ENCODE measurements at regions of chr15 and their contacts with region 1.

Region 1: GRCh38 chr15:40754883-40755811 is at the start of gene RMDN3:
- DNase-seq: peak; percentile 97
- ATAC-seq: peak; percentile 92
- H3K4me3 Mint-ChIP-seq: peak within 1 kb of the TSS; percentile 91
- H3K27ac Mint-ChIP-seq: peak within 1 kb of the TSS; percentile 99
- H3K4me1 Mint-ChIP-seq: peaks cover 27% of the 10 kb centered on the region
- H3K27me3 Mint-ChIP-seq: no peaks in the 10 kb centered on the region
- total RNA-seq, gene RMDN3: 12.3 to 18.8 TPM

Region 2: GRCh38 chr15:40593588-40594428 is 161.3 kb before region 1 on chr15 and contains the start of gene KNL1:
- CTCF ChIA-PET with region 1: no interaction called
- POLR2A ChIA-PET with region 1: no interaction called
- intact Hi-C with region 1: loop called in 1 of 2 experiments (anchors 1 kb)
- DNase-seq: peak; percentile 94
- ATAC-seq: peak; percentile 86
- H3K4me3 Mint-ChIP-seq: peak within 1 kb of the TSS; percentile 87
- H3K27ac Mint-ChIP-seq: peak within 1 kb of the TSS; percentile 95
- H3K4me1 Mint-ChIP-seq: peaks cover 24% of the 10 kb centered on the region
- H3K27me3 Mint-ChIP-seq: peaks cover 6% of the 10 kb centered on the region
- total RNA-seq, gene KNL1: 26.2 to 33.5 TPM

Region 3: GRCh38 chr15:40694688-40695468 is 60.3 kb before region 1 on chr15 and contains the start of gene RAD51:
- CTCF ChIA-PET with region 1: no interaction called
- POLR2A ChIA-PET with region 1: interaction called, 6 read pairs
- intact Hi-C with region 1: loop called (anchors 1 to 5 kb)
- DNase-seq: peak; percentile 96
- ATAC-seq: peak; percentile 93
- H3K4me3 Mint-ChIP-seq: peak within 1 kb of the TSS; percentile 95
- H3K27ac Mint-ChIP-seq: peak within 1 kb of the TSS; percentile 98
- H3K4me1 Mint-ChIP-seq: peaks cover 20% of the 10 kb centered on the region
- H3K27me3 Mint-ChIP-seq: no peaks in the 10 kb centered on the region
- total RNA-seq, gene RAD51: 73.5 to 75.3 TPM

Region 4: DNA sequence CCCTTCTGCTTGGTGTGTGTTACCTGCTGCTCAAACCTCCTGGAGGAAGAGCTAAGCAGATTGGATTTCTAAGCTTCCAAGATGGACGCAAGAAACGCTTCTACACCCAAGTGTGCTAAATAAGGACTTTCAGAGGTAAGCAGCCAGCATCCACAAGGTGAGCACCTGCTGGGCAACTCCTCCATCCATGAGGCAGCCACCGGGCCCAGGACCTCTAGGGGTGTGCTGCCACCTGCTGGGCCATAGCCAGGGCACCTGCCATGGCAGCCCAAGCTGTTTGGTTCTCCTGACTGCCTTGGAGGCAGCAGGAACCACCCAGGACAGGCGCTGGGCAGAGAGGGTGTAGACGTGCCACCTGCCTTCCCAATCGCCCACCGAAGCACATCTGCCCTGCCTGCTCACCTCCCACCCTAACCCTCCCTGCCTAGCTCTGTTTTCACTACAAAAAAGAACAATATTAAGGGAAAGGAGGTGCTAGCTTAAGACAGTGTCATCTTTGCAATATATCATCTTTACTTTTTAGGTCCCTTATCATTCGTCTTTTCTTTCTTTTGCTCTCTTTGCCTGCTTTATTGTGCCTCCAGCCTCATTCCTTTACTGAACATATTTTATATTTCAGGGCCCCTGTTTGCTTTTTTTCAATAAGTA is 27.6 kb after region 1 on chr15:
- CTCF ChIA-PET with region 1: interaction called, 12 read pairs
- POLR2A ChIA-PET with region 1: no interaction called
- intact Hi-C with region 1: loop called in 1 of 2 experiments (anchors 2 kb)
- DNase-seq: peak; percentile 90
- ATAC-seq: peak; percentile 89
- H3K4me3 Mint-ChIP-seq: no peak overlapping the region
- H3K27ac Mint-ChIP-seq: no peak overlapping the region
- H3K4me1 Mint-ChIP-seq: peaks cover 15% of the 10 kb centered on the region
- H3K27me3 Mint-ChIP-seq: no peaks in the 10 kb centered on the region

Region 5: DNA sequence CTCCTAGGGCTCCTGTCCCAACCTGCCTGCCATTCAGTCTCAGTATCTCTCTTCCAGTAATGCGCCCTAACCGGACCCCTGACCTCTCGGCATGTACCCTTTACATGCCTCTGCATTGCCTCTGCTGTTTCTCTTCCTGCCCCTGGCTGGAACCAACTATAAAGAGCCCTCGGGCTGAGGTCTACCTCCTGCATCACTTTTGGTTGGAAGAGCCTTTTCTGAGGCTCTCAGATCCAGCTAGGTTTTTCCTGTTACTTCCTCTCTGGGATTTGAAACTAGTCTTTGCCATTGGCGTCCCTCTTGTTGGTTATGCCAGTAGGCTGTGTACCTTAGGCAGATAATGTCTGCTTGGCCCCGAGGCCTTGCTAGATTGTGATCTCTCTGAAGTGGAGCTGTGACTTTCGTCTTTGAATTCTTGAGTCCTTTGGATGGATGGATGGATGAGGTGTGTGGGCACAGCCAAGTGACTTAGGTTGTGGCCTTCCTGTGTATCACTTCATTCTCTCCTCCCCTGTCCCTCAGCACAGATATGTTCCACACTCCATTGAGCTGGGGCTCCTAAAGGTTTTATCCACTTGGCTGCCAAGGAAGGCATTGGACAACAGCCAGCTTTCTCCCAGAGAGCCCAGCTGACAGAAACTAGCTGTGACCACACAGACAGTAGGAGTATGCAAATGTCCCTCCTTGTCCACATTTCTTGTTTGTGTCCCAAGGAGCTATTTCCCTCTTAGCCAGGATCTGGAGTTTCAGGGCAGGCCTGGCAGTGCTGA is 59.9 kb after region 1 on chr15:
- CTCF ChIA-PET with region 1: no interaction called
- POLR2A ChIA-PET with region 1: no interaction called
- intact Hi-C with region 1: no loop called
- DNase-seq: no peak
- ATAC-seq: no peak
- H3K4me3 Mint-ChIP-seq: no peak overlapping the region
- H3K27ac Mint-ChIP-seq: no peak overlapping the region
- H3K4me1 Mint-ChIP-seq: no peaks in the 10 kb centered on the region
- H3K27me3 Mint-ChIP-seq: no peaks in the 10 kb centered on the region

Region 6: GRCh38 chr15:41331833-41332787 is 577.0 kb after region 1 on chr15 and contains the start of gene OIP5:
- CTCF ChIA-PET with region 1: no interaction called
- POLR2A ChIA-PET with region 1: no interaction called
- intact Hi-C with region 1: loop called in 1 of 2 experiments (anchors 1 kb)
- DNase-seq: peak; percentile 99
- ATAC-seq: peak; percentile 98
- H3K4me3 Mint-ChIP-seq: peak within 1 kb of the TSS; percentile 91
- H3K27ac Mint-ChIP-seq: peak within 1 kb of the TSS; percentile 92
- H3K4me1 Mint-ChIP-seq: peaks cover 26% of the 10 kb centered on the region
- H3K27me3 Mint-ChIP-seq: no peaks in the 10 kb centered on the region
- total RNA-seq, gene OIP5: 11.5 to 14.0 TPM

Measured in activated CD4-positive, alpha-beta T cell treated with anti-CD3 and anti-CD28 coated beads for 36 hours (primary cell).